Left cardiac atrium (tissue), 4 donors: ENCODE measurements at regions of chr16 and their contacts with region 1.

Region 1: GRCh38 chr16:29112755-29113347 is 128.0 kb downstream of the LAT start:
- DNase-seq: no peak
- ATAC-seq: no peak

Region 2: DNA sequence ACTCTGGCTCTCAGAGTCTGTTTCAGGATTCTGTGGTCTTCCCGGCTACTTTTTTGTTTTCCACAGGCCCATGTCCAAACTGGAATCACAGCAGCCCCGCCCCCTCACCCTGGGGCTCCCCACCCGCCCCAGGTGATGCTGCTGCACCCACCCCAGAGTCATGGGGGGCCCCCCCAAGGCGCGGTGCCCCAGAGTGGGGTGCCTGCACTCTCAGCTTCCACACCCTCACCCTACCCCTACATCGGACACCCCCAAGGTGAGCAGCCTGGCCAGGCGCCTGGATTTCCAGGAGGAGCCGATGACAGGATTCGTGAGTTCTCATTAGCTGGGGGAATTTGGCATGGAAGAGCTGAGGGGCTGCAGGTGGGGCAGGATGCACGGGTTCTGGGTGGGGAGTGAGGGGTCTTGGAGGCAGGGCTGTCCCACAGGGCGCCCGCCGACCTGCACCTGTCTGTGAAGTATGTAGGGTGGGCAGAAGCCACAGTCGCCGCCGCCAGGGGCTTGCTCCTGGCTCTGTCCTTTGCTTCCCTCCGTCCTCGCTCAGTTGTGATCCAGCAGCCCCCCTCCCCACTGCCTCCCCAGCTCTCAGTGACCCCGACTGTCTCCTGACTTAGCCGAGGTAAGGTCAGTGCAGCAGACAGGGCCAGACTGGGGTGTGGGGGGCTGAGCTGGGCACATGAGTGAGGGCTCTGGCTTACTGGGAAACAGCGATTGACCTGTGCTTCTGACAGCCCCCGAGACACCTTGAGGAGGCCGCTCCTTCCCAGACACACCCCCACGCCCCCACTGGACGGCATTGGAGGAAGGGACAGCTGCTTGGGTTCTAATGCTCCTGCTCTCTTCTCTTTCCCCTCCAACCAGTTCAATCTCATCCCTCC is 276.7 kb before region 1 on chr16:
- intact Hi-C with region 1: no loop called
- DNase-seq: no peak
- ATAC-seq: no peak

Region 3: DNA sequence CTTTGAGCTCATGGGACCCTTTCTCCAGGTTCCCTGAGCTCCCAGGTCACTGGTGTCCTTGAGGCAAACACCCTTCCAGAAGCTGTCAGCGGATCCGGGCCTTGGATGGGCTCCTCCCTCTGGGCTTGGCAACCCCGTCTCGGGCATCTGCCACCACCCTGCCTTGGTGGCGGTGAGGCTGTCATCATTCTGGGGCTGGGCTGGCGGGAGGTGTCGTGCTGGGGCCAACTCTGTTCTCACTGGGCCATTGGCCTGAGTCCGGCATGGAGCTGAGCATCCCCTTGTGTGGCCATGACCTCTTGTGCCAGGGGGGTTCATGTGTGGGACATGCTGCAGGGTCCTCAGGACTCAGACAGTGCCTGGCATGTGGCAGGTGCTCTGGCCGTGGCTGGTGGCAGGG is 69.7 kb after region 1 on chr16:
- intact Hi-C with region 1: no loop called
- DNase-seq: peak; percentile 69
- ATAC-seq: peak; percentile 5 to 10

Region 4: GRCh38 chr16:29256501-29256981 is 143.7 kb after region 1 on chr16:
- intact Hi-C with region 1: loop called in 1 of 2 experiments (anchors 10 kb)
- DNase-seq: no peak
- ATAC-seq: no peak